GM12878 (cell line): ENCODE measurements at regions of chr7 and their contacts with region 1.

Region 1: DNA sequence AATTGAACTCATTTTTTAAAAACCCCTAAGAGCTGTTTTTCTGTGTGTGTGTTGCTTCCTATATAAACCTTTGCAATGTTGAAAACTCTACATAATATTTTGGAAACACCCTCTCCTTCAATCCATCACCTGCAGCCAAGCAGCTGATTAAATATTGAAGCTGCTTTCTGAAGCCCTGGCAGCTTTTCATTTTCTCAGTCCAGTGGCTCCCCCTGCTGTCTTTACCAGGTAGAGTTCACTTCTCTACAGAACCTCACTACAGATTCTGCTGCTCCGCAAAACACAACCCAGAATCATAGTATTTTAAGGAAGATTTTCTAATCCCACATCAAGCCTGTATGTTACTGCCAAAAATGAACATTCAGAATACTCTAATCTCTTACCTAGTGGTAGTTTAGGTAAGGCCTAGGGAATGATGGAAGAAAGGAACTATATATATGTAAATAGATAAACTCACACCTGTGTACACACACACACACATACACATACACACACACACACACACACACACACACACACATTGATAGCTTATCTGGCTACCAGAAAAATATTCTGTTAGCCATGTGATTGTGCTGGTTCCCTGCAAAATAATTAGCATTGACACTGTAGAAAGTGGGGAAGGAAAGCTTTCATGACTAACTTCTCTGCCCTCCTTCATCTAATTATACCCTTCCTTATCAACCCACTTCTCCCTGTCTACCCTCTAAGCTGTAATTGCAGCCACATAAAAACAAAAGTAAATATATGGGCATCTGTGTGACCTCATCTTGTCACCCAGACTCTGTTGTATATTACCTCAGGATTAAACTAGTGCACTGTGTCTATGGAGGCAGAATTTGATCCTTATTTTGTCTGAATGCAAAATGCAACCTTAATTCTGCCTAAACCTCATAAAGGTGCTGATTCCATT is 229.5 kb upstream of the FZD1 start:
- DNase-seq: no peak
- ATAC-seq: peak; percentile 89
- H3K4me3 ChIP-seq: no peak overlapping the region
- H3K27ac ChIP-seq: no peak overlapping the region
- H3K4me1 ChIP-seq: no peaks in the 10 kb centered on the region
- H3K27me3 ChIP-seq: no peaks in the 10 kb centered on the region
- CTCF ChIP-seq: peak; percentile 64 to 78 (median 65)
- EP300 ChIP-seq: no peak
- POLR2A ChIP-seq: no peak
- RAD21 ChIP-seq: peak; percentile 95

Region 2: DNA sequence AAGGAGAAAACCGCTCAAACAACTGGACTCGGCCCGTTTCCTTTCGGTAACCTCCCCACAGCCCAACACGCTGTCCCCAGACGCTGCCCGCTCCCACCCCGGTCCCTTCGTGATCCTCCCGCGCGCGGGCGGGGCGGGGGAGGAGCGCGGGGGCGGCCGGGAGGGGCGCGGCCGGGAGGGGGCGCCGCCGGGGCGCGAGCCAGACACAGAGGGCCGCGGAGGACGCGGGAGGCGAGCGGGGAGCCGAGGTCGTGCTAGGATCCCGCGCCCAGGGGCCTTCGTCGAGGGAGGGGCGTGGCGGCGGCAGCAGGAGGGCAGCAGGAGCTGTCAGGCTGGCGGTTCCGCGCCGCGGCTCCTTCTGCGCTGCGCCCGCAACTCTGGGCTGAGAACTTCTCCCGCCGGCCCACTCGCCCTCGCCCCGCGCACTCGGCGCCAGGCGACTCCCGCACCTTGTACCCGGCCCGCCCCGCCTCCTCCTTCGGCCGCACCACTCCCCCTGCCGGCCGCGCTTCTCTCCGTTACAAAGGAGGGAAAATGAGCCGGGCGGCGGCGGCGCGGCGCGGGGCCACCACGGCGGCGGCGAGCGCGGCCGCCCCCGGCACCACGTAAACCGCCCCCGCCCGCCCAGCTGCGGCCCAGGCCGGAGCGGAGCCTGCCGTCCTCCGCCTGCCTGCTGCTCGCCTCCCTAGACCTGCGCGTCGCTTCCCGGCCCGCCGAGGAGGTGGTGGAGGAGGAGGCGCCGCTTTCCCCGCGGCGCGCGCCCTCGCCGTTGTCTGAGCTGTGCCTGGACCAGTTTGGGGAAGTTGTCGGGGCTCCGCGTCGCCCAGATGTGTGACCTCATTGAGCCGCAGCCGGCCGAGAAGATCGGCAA is 438.7 kb before region 1 on chr7 and contains the start of gene CDK14:
- CTCF ChIA-PET with region 1: interaction called, 7 read pairs
- POLR2A ChIA-PET with region 1: no interaction called
- RAD21 ChIA-PET with region 1: interaction called, 3 read pairs
- SMC1A ChIA-PET with region 1: interaction called, 4 read pairs
- in situ Hi-C with region 1: no loop called
- intact Hi-C with region 1: loop called (anchors 10 kb)
- DNase-seq: no peak
- ATAC-seq: peak; percentile 58
- H3K4me3 ChIP-seq: peak within 1 kb of the TSS; percentile 92
- H3K27ac ChIP-seq: peak within 1 kb of the TSS; percentile 55
- H3K4me1 ChIP-seq: peaks cover 10% of the 10 kb centered on the region
- H3K27me3 ChIP-seq: no peaks in the 10 kb centered on the region
- CTCF ChIP-seq: peak in 2 of 3 experiments; percentile 29 to 33; a peak in 3 of 6 replicates
- EP300 ChIP-seq: no peak
- POLR2A ChIP-seq: peak; percentile 78
- RAD21 ChIP-seq: peak; percentile 44; the same call in 1 of the 2 replicates
- polyA plus RNA-seq, gene CDK14: 6.5 to 7.3 TPM

Region 3: DNA sequence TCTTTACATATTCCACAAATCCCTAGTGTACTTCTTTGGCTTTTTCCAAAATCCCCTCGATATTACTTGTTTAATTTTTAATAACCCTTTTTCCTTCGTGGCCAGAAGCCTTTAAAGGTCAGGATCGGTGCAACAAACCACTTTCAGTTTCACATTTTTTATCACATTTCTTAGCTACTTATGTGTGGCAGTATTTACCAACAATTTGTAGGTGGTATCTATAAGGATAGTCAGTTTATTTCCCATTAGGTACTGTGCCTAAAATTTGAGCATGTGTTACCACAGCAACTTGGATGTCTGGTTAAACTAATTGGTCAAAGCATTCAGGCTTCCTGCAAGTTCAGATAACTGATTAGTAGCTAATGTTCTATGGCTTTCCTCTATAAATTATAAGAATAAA is 333.7 kb before region 1 on chr7:
- CTCF ChIA-PET with region 1: interaction called, 271 read pairs
- POLR2A ChIA-PET with region 1: interaction called, 3 read pairs
- RAD21 ChIA-PET with region 1: interaction called, 132 read pairs
- SMC1A ChIA-PET with region 1: interaction called, 176 read pairs
- in situ Hi-C with region 1: no loop called
- intact Hi-C with region 1: no loop called
- DNase-seq: no peak
- ATAC-seq: peak; percentile 81
- H3K4me3 ChIP-seq: peak overlapping the region; percentile 58; the same call in 1 of the 2 replicates
- H3K27ac ChIP-seq: peak overlapping the region; percentile 47
- H3K4me1 ChIP-seq: peaks cover 4% of the 10 kb centered on the region
- H3K27me3 ChIP-seq: no peaks in the 10 kb centered on the region
- CTCF ChIP-seq: no peak
- EP300 ChIP-seq: no peak
- POLR2A ChIP-seq: no peak
- RAD21 ChIP-seq: no peak

Region 4: DNA sequence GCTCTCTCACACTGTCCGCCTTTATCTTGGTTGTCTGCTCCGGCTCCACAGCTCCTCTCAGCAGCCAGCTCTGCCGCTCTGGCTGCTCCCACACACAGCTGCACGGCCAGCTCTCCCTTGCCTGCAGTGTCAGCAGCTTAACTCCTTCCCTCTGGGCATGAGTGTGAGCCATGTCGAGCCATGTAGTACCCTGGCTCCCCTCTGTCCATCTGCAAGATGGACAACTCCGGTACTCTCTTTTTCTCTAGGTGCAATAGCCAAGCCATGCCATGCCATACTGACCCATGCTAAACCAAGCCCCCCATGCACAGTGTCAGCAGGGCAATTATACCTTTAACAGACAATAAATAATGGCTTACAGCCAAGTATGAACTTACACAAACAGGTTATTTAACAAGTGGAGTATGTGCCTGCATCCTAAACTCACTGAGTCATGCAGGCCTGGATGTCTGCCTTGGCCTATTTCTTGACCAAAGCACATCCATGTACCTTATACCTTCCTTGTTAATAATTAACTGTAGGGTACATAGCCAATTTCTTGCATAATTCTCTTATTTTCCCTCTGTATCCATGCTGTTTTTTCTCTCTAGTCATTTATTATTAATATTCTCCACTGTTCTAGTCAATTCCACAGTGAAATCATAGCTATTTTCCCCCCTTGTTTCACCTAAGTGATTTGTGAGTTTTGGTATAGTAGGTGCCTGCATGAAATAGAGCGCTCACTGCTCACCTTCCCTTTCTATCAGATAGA is 267.7 kb before region 1 on chr7:
- CTCF ChIA-PET with region 1: interaction called, 4 read pairs
- POLR2A ChIA-PET with region 1: no interaction called
- RAD21 ChIA-PET with region 1: interaction called, 3 read pairs
- SMC1A ChIA-PET with region 1: no interaction called
- in situ Hi-C with region 1: no loop called
- intact Hi-C with region 1: loop called (anchors 5 kb)
- DNase-seq: no peak
- ATAC-seq: no peak; the same call in 2 of the 3 replicates
- H3K4me3 ChIP-seq: no peak overlapping the region
- H3K27ac ChIP-seq: no peak overlapping the region
- H3K4me1 ChIP-seq: no peaks in the 10 kb centered on the region
- H3K27me3 ChIP-seq: no peaks in the 10 kb centered on the region
- CTCF ChIP-seq: no peak
- EP300 ChIP-seq: no peak
- POLR2A ChIP-seq: no peak
- RAD21 ChIP-seq: no peak

Region 5: GRCh38 chr7:90945104-90945787 is 89.5 kb before region 1 on chr7:
- CTCF ChIA-PET with region 1: no interaction called
- POLR2A ChIA-PET with region 1: interaction called, 4 read pairs
- RAD21 ChIA-PET with region 1: no interaction called
- SMC1A ChIA-PET with region 1: interaction called, 10 read pairs
- in situ Hi-C with region 1: no loop called
- intact Hi-C with region 1: no loop called
- DNase-seq: no peak
- ATAC-seq: no peak
- H3K4me3 ChIP-seq: no peak overlapping the region
- H3K27ac ChIP-seq: no peak overlapping the region
- H3K4me1 ChIP-seq: peaks cover 9% of the 10 kb centered on the region; the same call in 1 of the 2 replicates
- H3K27me3 ChIP-seq: no peaks in the 10 kb centered on the region
- CTCF ChIP-seq: no peak
- EP300 ChIP-seq: no peak
- POLR2A ChIP-seq: no peak
- RAD21 ChIP-seq: no peak

Region 6: DNA sequence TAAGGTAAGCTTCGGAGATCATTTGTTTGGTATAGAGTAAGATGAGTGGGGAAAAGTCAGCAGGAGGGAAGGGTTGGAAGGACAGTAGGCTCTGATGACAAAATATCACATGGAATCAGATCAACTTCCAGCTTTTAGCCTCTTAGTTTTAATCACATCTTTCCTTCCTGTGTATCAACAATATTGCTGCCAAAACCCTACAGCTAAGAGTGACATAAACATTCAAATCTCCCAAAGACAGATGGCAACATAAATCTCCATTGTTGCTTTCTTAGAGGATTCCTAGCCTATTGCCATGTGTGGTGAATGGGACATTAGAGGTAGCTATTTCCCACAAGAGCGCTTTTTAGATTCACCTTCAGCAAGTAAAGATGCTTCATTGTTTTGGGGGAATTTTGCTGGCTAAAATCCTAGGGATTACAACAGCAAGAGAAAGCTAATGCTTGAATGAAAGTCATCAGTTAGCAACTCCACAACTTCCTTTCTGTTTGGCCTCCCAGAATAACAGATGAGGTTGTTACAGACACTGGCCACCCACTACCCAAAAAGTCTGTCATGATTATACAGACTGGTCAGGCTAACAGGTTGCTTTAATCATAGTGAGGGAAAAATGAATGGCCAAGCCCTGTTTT is 194.3 kb after region 1 on chr7:
- CTCF ChIA-PET with region 1: no interaction called
- POLR2A ChIA-PET with region 1: no interaction called
- RAD21 ChIA-PET with region 1: no interaction called
- SMC1A ChIA-PET with region 1: no interaction called
- in situ Hi-C with region 1: no loop called
- intact Hi-C with region 1: no loop called
- DNase-seq: no peak
- ATAC-seq: no peak
- H3K4me3 ChIP-seq: no peak overlapping the region
- H3K27ac ChIP-seq: no peak overlapping the region
- H3K4me1 ChIP-seq: no peaks in the 10 kb centered on the region
- H3K27me3 ChIP-seq: no peaks in the 10 kb centered on the region
- CTCF ChIP-seq: no peak
- EP300 ChIP-seq: no peak
- POLR2A ChIP-seq: no peak
- RAD21 ChIP-seq: no peak